PC-9 (cell line): ENCODE measurements at regions of chr2 and their contacts with region 1.

Region 1: DNA sequence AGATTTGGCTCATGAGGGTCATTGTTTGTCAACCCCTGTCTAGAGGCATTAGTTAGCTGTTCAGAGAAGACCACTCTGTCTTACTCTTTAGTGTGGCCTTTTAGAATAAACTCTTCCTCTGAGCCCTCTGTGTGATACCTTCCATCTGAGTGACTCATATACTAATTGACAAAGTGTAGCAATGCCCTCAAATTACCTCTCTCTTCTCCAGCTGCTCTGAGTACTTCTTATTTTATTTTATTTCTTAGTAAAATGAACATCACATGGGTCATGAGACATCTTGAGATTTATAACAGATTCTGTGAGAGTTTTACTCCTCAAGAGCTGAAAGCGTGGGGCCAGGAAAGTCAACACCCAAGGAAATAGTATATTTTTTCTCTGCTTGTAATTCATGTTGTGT is 67.4 kb downstream of the KCTD18 start:
- DNase-seq: no peak
- H3K4me3 ChIP-seq: no peak overlapping the region
- H3K27ac ChIP-seq: no peak overlapping the region
- H3K4me1 ChIP-seq: no peaks in the 10 kb centered on the region
- H3K27me3 ChIP-seq: no peaks in the 10 kb centered on the region
- CTCF ChIP-seq: no peak

Region 2: DNA sequence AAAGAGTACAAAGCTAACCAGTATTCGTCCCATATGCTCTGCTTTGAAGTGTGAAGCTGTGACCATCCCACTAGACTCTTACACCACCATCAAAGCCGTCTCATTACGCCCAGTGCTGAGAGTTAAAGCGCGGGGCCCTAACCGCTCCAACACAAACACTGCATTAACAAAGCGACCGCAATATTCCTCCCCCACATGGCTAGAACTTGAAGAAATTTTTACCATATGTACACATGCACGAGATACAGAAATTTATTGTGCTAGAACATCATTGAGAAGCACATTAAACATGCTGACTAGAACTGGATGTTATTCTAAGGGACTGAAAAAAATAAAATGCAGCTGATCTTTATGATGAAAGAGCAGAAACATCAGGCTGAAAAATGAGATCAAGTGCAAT is 611.9 kb before region 1 on chr2:
- CTCF ChIA-PET with region 1: no interaction called
- POLR2A ChIA-PET with region 1: interaction called, 10 read pairs
- intact Hi-C with region 1: no loop called
- DNase-seq: no peak
- H3K4me3 ChIP-seq: no peak overlapping the region
- H3K27ac ChIP-seq: no peak overlapping the region
- H3K4me1 ChIP-seq: no peaks in the 10 kb centered on the region
- H3K27me3 ChIP-seq: no peaks in the 10 kb centered on the region
- CTCF ChIP-seq: no peak